ENCODE measurements at regions of chr2 and their contacts with region 1.

Region 1: DNA sequence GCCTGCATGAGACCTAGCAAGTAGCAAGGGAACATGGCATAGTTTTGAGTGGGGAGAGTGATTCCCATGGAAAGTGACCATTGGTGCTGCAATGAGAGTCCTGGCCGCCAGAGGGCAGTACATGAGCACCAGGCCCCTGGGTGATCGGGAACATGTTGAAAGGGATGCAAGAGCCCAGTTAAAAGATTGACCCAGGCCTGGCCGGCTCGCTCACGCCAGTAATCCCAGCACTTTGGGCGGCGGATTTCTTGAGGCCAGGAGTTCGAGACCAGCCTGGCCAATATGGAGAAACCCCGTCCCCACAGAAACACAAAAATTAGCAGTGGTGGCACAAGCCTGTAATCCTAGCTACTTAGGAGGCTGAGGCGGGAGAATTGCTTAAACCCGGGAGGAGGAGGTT is 22.2 kb downstream of the FAP start:
- DNase-seq: peak; percentile 50
- H3K4me3 ChIP-seq: no peak overlapping the region
- H3K27ac ChIP-seq: no peak overlapping the region
- H3K4me1 ChIP-seq: no peaks in the 10 kb centered on the region
- H3K27me3 ChIP-seq: no peaks in the 10 kb centered on the region
- CTCF ChIP-seq: peak; percentile 83

Region 2: GRCh38 chr2:162297925-162298552 is 77.0 kb after region 1 on chr2:
- intact Hi-C with region 1: loop called (anchors 5 kb)
- DNase-seq: no peak
- H3K4me3 ChIP-seq: no peak overlapping the region
- H3K27ac ChIP-seq: no peak overlapping the region
- H3K4me1 ChIP-seq: no peaks in the 10 kb centered on the region
- H3K27me3 ChIP-seq: no peaks in the 10 kb centered on the region
- CTCF ChIP-seq: peak; percentile 90